Left lung (tissue), 14 donors: ENCODE measurements at regions of chr3 and their contacts with region 1.

Region 1: DNA sequence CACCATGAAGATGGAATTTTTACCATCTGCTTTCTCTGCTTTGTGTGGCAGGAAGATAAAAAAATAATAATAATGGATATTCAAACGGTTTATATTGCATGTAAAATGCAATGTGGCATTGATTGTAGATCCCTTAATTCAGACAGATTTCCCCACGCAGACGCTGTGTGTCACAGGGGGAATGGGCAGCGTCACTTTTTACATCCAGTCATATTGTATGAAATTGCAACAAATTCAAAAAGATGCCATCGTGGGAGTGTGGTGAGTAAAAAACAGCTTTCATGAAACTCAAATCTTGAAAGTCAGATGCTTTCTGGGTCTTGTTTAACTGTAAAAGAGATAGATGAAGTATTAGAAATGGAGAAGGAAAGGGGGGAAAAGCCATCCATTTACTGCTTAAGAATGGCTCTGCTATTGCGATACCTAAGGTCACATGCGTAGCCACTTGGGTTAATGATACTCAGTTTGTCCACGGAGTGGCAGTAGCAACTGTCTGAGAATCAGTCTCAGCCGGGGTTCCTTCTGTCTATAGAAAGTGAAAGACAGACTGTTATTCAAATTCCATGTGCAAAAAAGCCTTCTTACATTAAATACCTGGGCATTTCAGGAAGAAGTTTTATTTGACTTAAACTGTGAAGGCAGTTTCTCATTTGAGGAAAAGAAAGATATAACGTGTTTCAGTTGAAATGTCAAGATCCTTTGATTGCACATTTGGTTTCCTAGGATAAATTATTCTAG is 28.5 kb downstream of the BTD start:
- DNase-seq: peak in 3 of 4 donors; percentile 48 to 82 (median 63)
- ATAC-seq: peak; percentile 98
- H3K4me3 ChIP-seq: peak overlapping the region in 1 of 2 donors; percentile 25
- H3K27ac ChIP-seq: peak overlapping the region; percentile 57 to 72
- H3K4me1 ChIP-seq: peaks cover 0 to 22% of the 10 kb centered on the region in 2 donors
- H3K27me3 ChIP-seq: no peaks in the 10 kb centered on the region
- CTCF ChIP-seq: peak; percentile 60 to 72

Region 2: DNA sequence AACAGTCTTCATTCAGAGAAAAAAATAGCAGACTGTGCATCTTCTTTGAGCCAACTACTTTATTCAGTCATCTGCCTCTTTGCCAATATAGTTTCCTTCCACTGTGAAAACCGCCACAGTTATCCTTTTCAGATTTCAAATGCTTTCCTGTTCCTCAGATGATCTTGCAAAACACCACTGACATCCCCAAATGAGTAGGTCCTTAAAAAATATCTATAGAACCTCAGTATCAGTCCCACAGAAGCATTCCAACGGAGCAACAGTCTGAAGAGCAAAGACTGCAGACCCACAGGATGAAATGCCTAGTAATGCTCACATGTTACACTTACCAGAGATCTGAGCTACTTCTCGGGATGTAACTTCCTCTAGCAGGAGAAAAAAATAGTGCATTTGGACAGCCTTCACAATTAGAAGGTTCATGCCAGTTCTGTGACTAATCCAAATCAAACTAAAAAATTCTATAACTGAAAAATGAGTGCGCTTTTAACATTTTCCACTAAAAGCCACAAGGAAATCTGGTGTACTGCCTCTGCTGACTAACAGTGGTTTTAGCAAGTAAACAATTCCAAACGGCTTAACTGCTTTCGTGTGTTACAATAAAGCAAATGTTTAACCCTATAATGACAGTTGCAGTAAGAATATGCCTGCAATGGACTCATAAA is 167.7 kb after region 1 on chr3 and contains the start of gene ANKRD28:
- intact Hi-C with region 1: loop called in 1 of 2 experiments (anchors 5 kb)
- DNase-seq: peak in 2 of 4 donors; percentile 60 to 65
- ATAC-seq: peak; percentile 72
- H3K4me3 ChIP-seq: peak within 1 kb of the TSS; percentile 18 to 37
- H3K27ac ChIP-seq: peak within 1 kb of the TSS; percentile 91 to 97
- H3K4me1 ChIP-seq: peaks cover 2 to 85% of the 10 kb centered on the region in 2 donors
- H3K27me3 ChIP-seq: no peaks in the 10 kb centered on the region
- CTCF ChIP-seq: peak; percentile 10 to 22
- polyA plus RNA-seq, gene ANKRD28: 36.6 to 52.4 (median 41.9) TPM